ENCODE measurements at regions of chr12 and their contacts with region 1.

Region 1: GRCh38 chr12:57771708-57772428 is at the start of gene METTL1:
- DNase-seq: peak; percentile 70 to 91 (median 86)
- ATAC-seq: peak; percentile 92
- H3K4me3 ChIP-seq: peak within 1 kb of the TSS; percentile 99
- H3K4me3 Mint-ChIP-seq: peak within 1 kb of the TSS; percentile 88 to 97 (median 94)
- H3K27ac ChIP-seq: peak within 1 kb of the TSS; percentile 90
- H3K27ac Mint-ChIP-seq: peak within 1 kb of the TSS; percentile 74 to 98 (median 97)
- H3K4me1 ChIP-seq: peaks cover 6 to 13% of the 10 kb centered on the region in 2 donors
- H3K4me1 Mint-ChIP-seq: peaks cover 21 to 35% (median 25%) of the 10 kb centered on the region in 7 donors
- H3K27me3 ChIP-seq: no peaks in the 10 kb centered on the region
- H3K27me3 Mint-ChIP-seq: peaks cover 0 to 3% (median 2%) of the 10 kb centered on the region in 5 donors
- total RNA-seq, gene METTL1: 11.8 to 30.9 (median 16.0) TPM

Region 2: GRCh38 chr12:57712701-57713100 is 59.2 kb before region 1 on chr12:
- CTCF ChIA-PET with region 1: no interaction called
- POLR2A ChIA-PET with region 1: no interaction called
- intact Hi-C with region 1: no loop called
- DNase-seq: no peak
- ATAC-seq: no peak
- H3K4me3 ChIP-seq: no peak overlapping the region
- H3K4me3 Mint-ChIP-seq: no peak overlapping the region
- H3K27ac ChIP-seq: no peak overlapping the region
- H3K27ac Mint-ChIP-seq: peak overlapping the region in 2 of 9 donors; percentile 5 to 32
- H3K4me1 ChIP-seq: no peaks in the 10 kb centered on the region
- H3K4me1 Mint-ChIP-seq: peaks cover 0 to 10% (median 7%) of the 10 kb centered on the region in 7 donors
- H3K27me3 ChIP-seq: no peaks in the 10 kb centered on the region
- H3K27me3 Mint-ChIP-seq: no peaks in the 10 kb centered on the region

Region 3: GRCh38 chr12:57782608-57783465 is 11.0 kb after region 1 on chr12 and contains the start of gene TSFM:
- CTCF ChIA-PET with region 1: interaction called, 10 read pairs
- POLR2A ChIA-PET with region 1: interaction called, 7 read pairs
- intact Hi-C with region 1: loop called (anchors 1 kb)
- DNase-seq: peak; percentile 90 to 97 (median 95)
- ATAC-seq: peak; percentile 99
- H3K4me3 ChIP-seq: peak within 1 kb of the TSS; percentile 97
- H3K4me3 Mint-ChIP-seq: peak within 1 kb of the TSS; percentile 96 to 100 (median 99)
- H3K27ac ChIP-seq: peak within 1 kb of the TSS; percentile 85
- H3K27ac Mint-ChIP-seq: peak within 1 kb of the TSS; percentile 95 to 100 (median 99)
- H3K4me1 ChIP-seq: peaks cover 36 to 40% of the 10 kb centered on the region in 2 donors
- H3K4me1 Mint-ChIP-seq: peaks cover 23 to 65% (median 48%) of the 10 kb centered on the region in 7 donors
- H3K27me3 ChIP-seq: no peaks in the 10 kb centered on the region
- H3K27me3 Mint-ChIP-seq: no peaks in the 10 kb centered on the region
- total RNA-seq, gene TSFM: 17.8 to 34.9 (median 22.3) TPM

Region 4: GRCh38 chr12:57941165-57941894 is 169.5 kb after region 1 on chr12 and contains the start of gene ATP23:
- CTCF ChIA-PET with region 1: no interaction called
- POLR2A ChIA-PET with region 1: no interaction called
- intact Hi-C with region 1: loop called in 1 of 2 experiments (anchors 1 kb)
- DNase-seq: peak; percentile 82 to 95 (median 90)
- ATAC-seq: peak; percentile 96
- H3K4me3 ChIP-seq: peak within 1 kb of the TSS; percentile 84
- H3K4me3 Mint-ChIP-seq: peak within 1 kb of the TSS; percentile 87 to 100 (median 98)
- H3K27ac ChIP-seq: peak within 1 kb of the TSS; percentile 90
- H3K27ac Mint-ChIP-seq: peak within 1 kb of the TSS; percentile 93 to 100 (median 99)
- H3K4me1 ChIP-seq: peaks cover 20 to 28% of the 10 kb centered on the region in 2 donors
- H3K4me1 Mint-ChIP-seq: peaks cover 24 to 54% (median 47%) of the 10 kb centered on the region in 7 donors
- H3K27me3 ChIP-seq: no peaks in the 10 kb centered on the region
- H3K27me3 Mint-ChIP-seq: no peaks in the 10 kb centered on the region
- total RNA-seq, gene ATP23: 7.2 to 12.3 (median 8.2) TPM

Region 5: DNA sequence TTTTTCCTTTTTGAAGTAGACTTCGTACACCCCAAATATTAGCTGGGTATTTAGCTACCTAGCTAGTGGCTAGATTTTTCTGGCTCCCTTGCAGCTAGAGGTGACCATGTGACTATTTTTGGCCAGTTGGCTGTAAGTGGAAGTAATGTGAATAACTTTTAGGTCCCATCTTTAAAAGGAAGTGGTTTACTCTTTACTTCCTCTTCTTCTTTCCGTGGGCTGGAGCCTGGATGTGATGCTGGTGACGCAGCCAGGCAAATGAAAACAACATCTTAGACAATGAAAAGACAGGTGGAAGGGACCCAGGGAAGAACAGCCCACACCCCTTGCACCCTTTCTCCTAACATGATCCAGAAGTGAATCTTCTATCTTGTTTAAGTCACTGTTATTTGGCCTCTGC is 415.0 kb after region 1 on chr12:
- CTCF ChIA-PET with region 1: no interaction called
- POLR2A ChIA-PET with region 1: no interaction called
- intact Hi-C with region 1: no loop called
- DNase-seq: no peak
- ATAC-seq: no peak
- H3K4me3 ChIP-seq: no peak overlapping the region
- H3K4me3 Mint-ChIP-seq: no peak overlapping the region
- H3K27ac ChIP-seq: no peak overlapping the region
- H3K27ac Mint-ChIP-seq: no peak overlapping the region
- H3K4me1 ChIP-seq: no peaks in the 10 kb centered on the region
- H3K4me1 Mint-ChIP-seq: no peaks in the 10 kb centered on the region
- H3K27me3 ChIP-seq: no peaks in the 10 kb centered on the region
- H3K27me3 Mint-ChIP-seq: peaks cover 0 to 23% (median 7%) of the 10 kb centered on the region in 5 donors

Measured in naive thymus-derived CD4-positive, alpha-beta T cell (primary cell).